Activated CD8-positive, alpha-beta T cell treated with anti-CD3 and anti-CD28 coated beads, Interleukin-2, amount 10 ng/mL, durations not matched to agents 7 days and 5 days (primary cell): ENCODE measurements at regions of chr2 and their contacts with region 1.

Region 1: DNA sequence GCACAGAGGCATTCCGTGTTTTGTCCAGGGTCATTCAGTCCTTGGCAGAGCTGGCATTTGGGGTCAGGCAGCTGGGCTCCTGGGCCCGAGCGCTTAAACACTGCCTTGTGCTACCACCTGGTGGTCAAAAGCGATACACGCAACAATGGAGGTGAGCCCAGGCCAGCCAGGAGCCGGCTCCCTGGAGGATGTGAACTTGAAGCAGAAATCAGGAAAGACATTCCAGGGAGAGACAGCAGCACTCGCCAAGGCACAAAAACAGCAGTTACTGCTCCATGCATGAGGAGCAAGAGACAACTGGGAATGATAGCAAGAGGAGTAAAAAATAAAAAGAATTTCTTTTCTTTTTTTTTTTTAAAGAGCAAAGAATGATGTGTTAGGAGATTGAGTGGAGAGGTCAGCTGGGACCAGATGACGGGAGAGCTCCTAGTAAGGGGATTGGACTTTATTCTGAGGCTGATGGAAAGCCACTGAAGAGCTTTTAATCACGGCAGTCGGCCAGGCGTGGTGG is 20.7 kb downstream of the SCYGR8 start:
- DNase-seq: peak; percentile 64
- ATAC-seq: peak; percentile 85
- H3K4me3 Mint-ChIP-seq: no peak overlapping the region
- H3K27ac Mint-ChIP-seq: no peak overlapping the region
- H3K4me1 Mint-ChIP-seq: no peaks in the 10 kb centered on the region
- H3K27me3 Mint-ChIP-seq: no peaks in the 10 kb centered on the region

Region 2: DNA sequence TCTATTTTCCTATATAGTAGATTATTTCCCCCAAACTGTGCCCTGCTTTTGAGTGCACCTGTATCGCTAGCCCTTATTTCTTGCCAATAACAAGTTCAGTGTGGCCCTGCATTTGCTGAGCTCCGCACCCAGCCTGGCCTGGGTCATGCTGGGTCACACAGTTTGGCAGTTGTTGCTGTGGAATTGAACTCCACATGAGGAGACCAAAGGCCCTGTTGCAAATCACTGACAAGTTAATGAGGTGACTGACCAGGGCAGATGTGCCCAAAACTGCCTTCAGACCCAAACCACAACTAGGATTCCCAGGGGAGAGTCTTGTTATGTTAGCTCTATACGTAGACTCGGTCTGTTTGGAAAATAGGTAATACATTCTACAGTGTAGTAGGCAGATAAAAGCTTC is 633.4 kb before region 1 on chr2:
- CTCF ChIA-PET with region 1: interaction called, 12 read pairs
- POLR2A ChIA-PET with region 1: no interaction called
- DNase-seq: no peak
- ATAC-seq: no peak
- H3K4me3 Mint-ChIP-seq: no peak overlapping the region
- H3K27ac Mint-ChIP-seq: no peak overlapping the region
- H3K4me1 Mint-ChIP-seq: no peaks in the 10 kb centered on the region
- H3K27me3 Mint-ChIP-seq: peaks cover 10% of the 10 kb centered on the region

Region 3: GRCh38 chr2:227363756-227364155 is 402.7 kb before region 1 on chr2:
- CTCF ChIA-PET with region 1: no interaction called
- POLR2A ChIA-PET with region 1: no interaction called
- DNase-seq: no peak
- ATAC-seq: no peak
- H3K4me3 Mint-ChIP-seq: no peak overlapping the region
- H3K27ac Mint-ChIP-seq: no peak overlapping the region
- H3K4me1 Mint-ChIP-seq: no peaks in the 10 kb centered on the region
- H3K27me3 Mint-ChIP-seq: no peaks in the 10 kb centered on the region

Region 4: DNA sequence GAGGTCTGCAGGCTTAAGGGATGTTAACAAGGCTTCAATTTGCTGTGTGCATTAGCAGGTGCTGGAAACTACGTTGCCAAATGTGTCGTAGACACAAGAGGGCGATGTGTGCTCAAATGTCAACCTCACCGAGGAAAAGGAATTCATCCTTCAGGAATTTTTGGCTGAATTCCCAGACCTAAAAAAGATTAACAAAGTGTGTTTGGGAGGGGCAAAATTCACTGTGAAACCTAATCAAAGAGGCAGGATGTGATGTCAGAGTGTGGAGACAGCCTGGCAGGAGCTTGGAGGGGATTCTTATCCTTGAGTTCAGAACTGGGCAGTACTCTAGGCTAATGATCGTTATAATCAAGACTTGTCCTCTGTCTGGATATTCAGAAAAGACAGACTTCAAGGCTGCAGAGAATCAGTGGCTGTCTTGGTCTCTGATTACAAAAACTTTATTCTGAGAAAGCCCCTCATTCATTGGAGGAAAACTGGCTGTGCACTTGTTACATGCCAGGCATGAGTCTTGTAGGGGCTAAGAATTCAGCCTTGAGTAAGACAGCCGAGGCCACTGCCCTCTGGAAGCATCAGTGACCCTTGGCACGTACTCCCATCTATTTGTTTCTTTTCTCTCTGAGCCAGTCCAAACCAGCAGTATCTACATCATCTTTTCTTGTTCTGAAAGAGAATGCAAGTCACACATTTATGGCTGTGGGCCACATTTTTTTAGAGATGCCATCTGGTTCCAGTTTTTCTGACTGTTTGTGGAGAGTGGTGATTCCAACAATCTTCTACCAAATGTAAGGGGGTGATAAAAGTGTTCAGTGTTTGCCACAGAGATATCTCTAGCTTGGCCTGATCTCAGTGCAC is 360.0 kb before region 1 on chr2:
- CTCF ChIA-PET with region 1: interaction called, 10 read pairs
- POLR2A ChIA-PET with region 1: no interaction called
- DNase-seq: no peak
- ATAC-seq: no peak
- H3K4me3 Mint-ChIP-seq: no peak overlapping the region
- H3K27ac Mint-ChIP-seq: no peak overlapping the region
- H3K4me1 Mint-ChIP-seq: peaks cover 20% of the 10 kb centered on the region
- H3K27me3 Mint-ChIP-seq: no peaks in the 10 kb centered on the region

Region 5: DNA sequence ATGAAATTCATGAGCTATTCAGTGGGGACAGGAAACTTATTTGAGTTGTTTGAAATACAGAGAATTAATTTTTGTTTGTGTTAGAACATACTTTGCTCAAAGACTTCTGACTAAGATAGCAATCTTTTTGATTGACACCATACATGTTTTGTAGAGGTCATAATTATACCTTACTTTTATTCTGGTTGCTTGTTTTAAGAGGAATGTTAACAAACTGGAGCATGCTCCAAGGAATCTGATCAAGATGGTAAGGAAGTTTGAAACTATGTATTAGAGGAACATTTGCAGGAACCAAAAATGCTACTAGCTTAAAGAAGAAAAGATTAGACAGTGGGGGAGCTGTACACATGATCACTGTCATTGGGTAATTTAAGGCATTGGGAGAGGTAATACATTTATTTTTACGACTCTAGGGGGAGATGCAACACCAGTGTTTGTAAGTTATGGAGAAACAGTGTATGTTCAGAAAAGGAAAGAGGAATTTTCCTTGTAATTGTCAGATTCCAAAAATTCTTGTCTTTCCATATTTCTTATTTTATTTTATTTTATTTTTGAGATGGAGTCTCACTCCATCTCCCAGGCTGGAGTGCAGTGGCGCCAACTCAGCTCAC is 286.5 kb before region 1 on chr2:
- CTCF ChIA-PET with region 1: interaction called, 15 read pairs
- POLR2A ChIA-PET with region 1: no interaction called
- DNase-seq: no peak
- ATAC-seq: peak; percentile 59
- H3K4me3 Mint-ChIP-seq: no peak overlapping the region
- H3K27ac Mint-ChIP-seq: no peak overlapping the region
- H3K4me1 Mint-ChIP-seq: peaks cover 47% of the 10 kb centered on the region
- H3K27me3 Mint-ChIP-seq: no peaks in the 10 kb centered on the region

Region 6: GRCh38 chr2:227657199-227657845 is 109.1 kb before region 1 on chr2:
- CTCF ChIA-PET with region 1: interaction called, 46 read pairs
- POLR2A ChIA-PET with region 1: no interaction called
- DNase-seq: no peak
- ATAC-seq: no peak
- H3K4me3 Mint-ChIP-seq: no peak overlapping the region
- H3K27ac Mint-ChIP-seq: no peak overlapping the region
- H3K4me1 Mint-ChIP-seq: no peaks in the 10 kb centered on the region
- H3K27me3 Mint-ChIP-seq: peaks cover 9% of the 10 kb centered on the region